ENCODE measurements at regions of chr2 and their contacts with region 1.

Region 1: GRCh38 chr2:175726223-175726622 is 275.8 kb downstream of the LNPK start:
- DNase-seq: no peak

Region 2: DNA sequence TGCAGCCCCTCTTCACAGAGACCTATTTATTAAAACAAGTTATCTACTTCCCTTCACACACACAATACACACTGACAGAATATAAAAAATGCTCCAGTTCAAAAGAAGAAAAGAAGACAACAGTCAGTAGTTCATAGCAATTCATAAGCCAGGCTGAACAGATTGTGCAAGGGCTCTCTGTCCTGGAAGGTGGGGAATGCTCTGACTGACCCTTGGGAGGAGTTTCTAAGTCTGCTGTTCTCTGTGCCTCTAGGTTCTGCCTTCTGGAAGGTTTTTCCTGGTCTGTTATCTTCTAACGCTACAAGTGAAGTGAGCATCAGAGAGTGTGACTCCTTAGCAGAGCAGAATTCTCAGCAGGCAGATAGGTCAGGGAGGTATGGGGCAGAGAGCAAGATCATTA is 1796.8 kb before region 1 on chr2:
- intact Hi-C with region 1: no loop called
- DNase-seq: no peak

Region 3: DNA sequence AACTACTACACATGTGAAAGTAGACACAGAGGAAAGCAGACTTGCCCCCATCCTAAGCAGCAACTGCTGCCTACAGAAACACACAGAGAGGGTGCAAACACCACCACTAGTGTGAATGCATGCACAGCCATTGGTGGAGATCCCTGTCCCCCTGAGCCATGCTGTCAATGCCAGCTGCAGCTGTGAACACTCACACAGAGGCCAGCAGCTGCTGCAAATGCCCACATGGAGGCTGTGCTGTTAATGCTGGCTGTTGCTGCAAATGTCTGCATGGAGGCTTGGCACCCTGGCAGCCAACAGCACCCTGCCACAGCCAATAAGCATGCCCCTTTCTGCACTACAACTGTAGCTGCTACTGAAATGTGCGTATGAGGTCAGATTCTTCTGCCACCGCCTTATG is 79.2 kb before region 1 on chr2:
- intact Hi-C with region 1: loop called in 1 of 2 experiments (anchors 2 kb)
- DNase-seq: no peak

Measured in posterior vena cava (tissue), 2 donors.